Activated T-helper 1 cell treated with anti-CD3 and anti-CD28 coated beads, Interleukin-12 subunit alpha, Interleukin-12 subunit beta, Interleukin-2, Interleukin-4 antibody, amounts not matched to agents 30 ng/mL and 10 ng/mL and 1 ng/mL, durations not matched to agents 14 hours and 24 hours and 36 hours (primary cell): ENCODE measurements at regions of chr15 and their contacts with region 1.

Region 1: DNA sequence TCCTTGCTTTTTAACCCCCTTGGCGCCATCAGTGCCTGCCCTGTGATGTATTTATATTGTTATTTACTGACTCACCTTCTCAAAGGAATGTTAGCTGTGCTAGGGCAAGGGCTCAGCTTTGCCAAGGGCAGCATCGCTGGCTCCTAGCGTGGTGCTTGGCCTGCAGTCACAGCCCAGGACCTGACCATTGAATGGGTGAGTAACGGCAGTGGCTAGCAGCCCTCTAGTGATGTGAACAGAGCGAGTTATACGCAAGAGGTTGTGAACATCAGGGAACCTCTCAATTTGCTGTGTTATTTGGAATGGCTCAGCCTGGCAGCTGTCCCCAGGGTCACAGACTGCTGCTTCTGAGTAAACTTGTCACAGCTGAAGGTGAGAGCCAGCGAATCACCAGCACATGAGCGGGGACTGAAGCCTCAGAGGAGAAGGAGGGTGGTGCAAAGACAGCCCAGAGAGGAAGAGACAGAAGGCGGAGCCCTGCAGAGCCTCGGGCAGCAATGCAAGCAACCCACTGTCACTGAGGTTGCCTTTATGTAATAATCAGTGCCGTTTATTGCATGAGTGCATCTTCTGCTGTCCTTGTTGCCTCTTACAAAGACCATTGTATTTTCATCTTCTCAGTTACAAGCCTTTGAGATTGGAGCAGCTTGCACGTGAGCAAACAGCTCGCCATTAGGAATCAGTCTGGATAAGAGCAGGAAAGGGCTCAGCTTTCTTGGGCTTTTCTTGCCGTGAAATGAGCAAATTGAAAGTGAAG is 158.3 kb downstream of the SLCO3A1 start:
- DNase-seq: no peak
- H3K4me3 Mint-ChIP-seq: no peak overlapping the region
- H3K27ac Mint-ChIP-seq: peak overlapping the region; percentile 50
- H3K4me1 Mint-ChIP-seq: peaks cover 46% of the 10 kb centered on the region
- H3K27me3 Mint-ChIP-seq: peaks cover 2% of the 10 kb centered on the region

Region 2: GRCh38 chr15:91942676-91943576 is 68.9 kb before region 1 on chr15:
- intact Hi-C with region 1: loop called (anchors 2 kb)
- DNase-seq: peak; percentile 44
- H3K4me3 Mint-ChIP-seq: peak overlapping the region; percentile 42
- H3K27ac Mint-ChIP-seq: peak overlapping the region; percentile 84
- H3K4me1 Mint-ChIP-seq: peaks cover 40% of the 10 kb centered on the region
- H3K27me3 Mint-ChIP-seq: no peaks in the 10 kb centered on the region

Region 3: GRCh38 chr15:92069308-92070250 is 57.8 kb after region 1 on chr15:
- intact Hi-C with region 1: loop called (anchors 2 kb)
- DNase-seq: no peak
- H3K4me3 Mint-ChIP-seq: peak overlapping the region; percentile 65
- H3K27ac Mint-ChIP-seq: peak overlapping the region; percentile 61
- H3K4me1 Mint-ChIP-seq: peaks cover 45% of the 10 kb centered on the region
- H3K27me3 Mint-ChIP-seq: no peaks in the 10 kb centered on the region

Region 4: DNA sequence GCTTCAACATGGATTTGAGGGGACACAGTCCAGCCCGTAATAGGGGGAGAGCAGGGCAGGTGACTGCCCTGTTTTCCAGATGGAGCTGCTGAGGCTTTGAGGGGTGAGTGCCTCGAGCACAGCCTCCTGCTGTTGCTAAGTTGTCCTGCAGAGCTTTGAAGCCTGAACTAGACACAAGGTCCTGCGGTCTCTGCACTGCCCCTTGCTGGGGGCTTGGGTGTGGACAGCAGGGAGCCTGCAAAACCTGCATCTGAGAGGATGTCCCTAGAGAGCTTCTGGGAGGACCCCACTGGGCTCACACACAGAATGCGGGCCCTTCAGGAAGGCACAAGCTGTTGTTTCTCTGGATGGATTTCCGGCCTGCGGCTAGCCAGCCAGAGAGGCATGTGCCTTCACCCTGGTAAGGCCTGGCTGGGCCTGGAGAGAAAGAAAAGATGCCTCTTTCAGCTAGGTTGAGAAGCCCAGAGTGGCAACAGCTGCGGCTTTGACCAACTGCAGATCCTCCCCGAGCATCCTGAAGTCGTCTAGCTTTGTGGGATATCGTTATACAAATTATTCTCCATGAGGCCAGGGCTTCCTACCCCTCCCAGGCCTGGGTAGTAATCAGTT is 68.0 kb after region 1 on chr15:
- intact Hi-C with region 1: no loop called
- DNase-seq: no peak
- H3K4me3 Mint-ChIP-seq: no peak overlapping the region
- H3K27ac Mint-ChIP-seq: no peak overlapping the region
- H3K4me1 Mint-ChIP-seq: peaks cover 11% of the 10 kb centered on the region
- H3K27me3 Mint-ChIP-seq: no peaks in the 10 kb centered on the region